ENCODE measurements at regions of chr9 and their contacts with region 1.

Region 1: GRCh38 chr9:1009101-1009707 is 32.7 kb downstream of the DMRT3 start:
- DNase-seq: peak; percentile 93
- H3K4me3 ChIP-seq: no peak overlapping the region
- H3K27ac ChIP-seq: no peak overlapping the region
- H3K4me1 ChIP-seq: peaks cover 0 to 13% (median 3%) of the 10 kb centered on the region in 6 donors
- H3K27me3 ChIP-seq: peaks cover 0 to 54% (median 3%) of the 10 kb centered on the region in 7 donors
- CTCF ChIP-seq: peak; percentile 76 to 97 (median 95)
- POLR2A ChIP-seq: no peak

Region 2: DNA sequence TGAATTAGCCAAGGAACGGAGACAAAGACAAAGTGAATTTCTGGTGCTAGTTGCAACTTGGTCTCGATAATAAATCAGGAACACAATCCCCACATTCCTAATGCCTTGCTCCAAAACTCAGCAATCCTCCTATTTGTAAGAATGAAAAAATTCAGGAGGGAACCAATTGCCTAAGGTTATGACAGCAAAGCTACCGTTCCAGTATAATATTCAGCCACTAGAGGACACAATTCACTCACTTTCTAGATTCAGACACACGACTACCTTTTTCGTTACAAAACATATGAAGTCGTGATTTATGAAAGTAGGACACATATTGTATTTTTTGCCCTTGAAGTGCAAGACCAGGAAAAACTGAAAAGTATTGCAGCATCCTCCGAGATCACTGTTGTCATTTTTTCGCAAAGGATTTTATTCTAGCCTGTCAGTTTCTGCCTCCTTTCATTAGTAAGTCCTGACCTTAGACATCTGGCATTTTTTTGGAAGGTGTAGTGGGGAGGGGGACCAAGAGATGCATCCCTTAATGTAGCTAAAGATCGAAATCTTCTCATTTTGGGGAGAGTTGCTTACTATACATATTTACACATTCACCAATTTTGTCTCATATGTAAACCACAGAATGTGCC is 661.4 kb before region 1 on chr9:
- intact Hi-C with region 1: no loop called
- DNase-seq: no peak
- H3K4me3 ChIP-seq: no peak overlapping the region
- H3K27ac ChIP-seq: no peak overlapping the region
- H3K4me1 ChIP-seq: peaks cover 0 to 41% (median 4%) of the 10 kb centered on the region in 6 donors
- H3K27me3 ChIP-seq: no peaks in the 10 kb centered on the region
- CTCF ChIP-seq: peak in 3 of 11 experiments; percentile 8 to 19 (median 13)
- POLR2A ChIP-seq: no peak

Region 3: GRCh38 chr9:613771-614347 is 395.3 kb before region 1 on chr9:
- intact Hi-C with region 1: loop called (anchors 10 kb)
- DNase-seq: peak; percentile 81
- H3K4me3 ChIP-seq: peak overlapping the region in 1 of 8 donors; percentile 5
- H3K27ac ChIP-seq: peak overlapping the region in 2 of 8 donors; percentile 7 to 49
- H3K4me1 ChIP-seq: peaks cover 0 to 17% (median 12%) of the 10 kb centered on the region in 6 donors
- H3K27me3 ChIP-seq: no peaks in the 10 kb centered on the region
- CTCF ChIP-seq: peak; percentile 53 to 86 (median 73)
- POLR2A ChIP-seq: no peak

Region 4: GRCh38 chr9:899440-900184 is 109.6 kb before region 1 on chr9:
- intact Hi-C with region 1: loop called (anchors 5 kb)
- DNase-seq: no peak
- H3K4me3 ChIP-seq: peak overlapping the region in 1 of 8 donors; percentile 24
- H3K27ac ChIP-seq: peak overlapping the region in 1 of 8 donors; percentile 19
- H3K4me1 ChIP-seq: peaks cover 0 to 16% (median 0%) of the 10 kb centered on the region in 6 donors
- H3K27me3 ChIP-seq: peaks cover 0 to 63% (median 3%) of the 10 kb centered on the region in 7 donors
- CTCF ChIP-seq: no peak
- POLR2A ChIP-seq: no peak

Region 5: GRCh38 chr9:928362-929042 is 80.7 kb before region 1 on chr9:
- intact Hi-C with region 1: no loop called
- DNase-seq: no peak
- H3K4me3 ChIP-seq: no peak overlapping the region
- H3K27ac ChIP-seq: no peak overlapping the region
- H3K4me1 ChIP-seq: no peaks in the 10 kb centered on the region
- H3K27me3 ChIP-seq: peaks cover 0 to 6% (median 0%) of the 10 kb centered on the region in 7 donors
- CTCF ChIP-seq: peak in 4 of 11 experiments; percentile 15 to 35 (median 29)
- POLR2A ChIP-seq: no peak

Region 6: DNA sequence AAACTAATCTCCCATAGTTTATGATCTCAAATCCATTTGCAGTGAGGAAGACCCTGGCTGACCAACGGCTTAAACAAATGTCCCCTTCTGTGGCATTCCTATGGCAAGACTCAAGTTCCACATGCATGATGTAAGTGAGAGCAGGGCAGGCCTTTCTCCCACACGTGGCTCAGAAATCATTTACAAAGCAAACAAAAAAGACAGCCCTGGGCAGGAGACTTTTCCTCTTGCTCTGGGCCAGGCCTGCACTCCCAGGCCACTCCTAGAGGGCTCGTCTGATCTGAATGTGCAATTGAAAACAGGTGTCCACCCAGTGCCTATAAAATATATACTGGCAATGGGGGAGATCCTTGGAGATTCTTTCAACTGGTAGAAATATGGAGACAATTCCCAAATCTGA is 164.0 kb after region 1 on chr9:
- intact Hi-C with region 1: no loop called
- DNase-seq: no peak
- H3K4me3 ChIP-seq: no peak overlapping the region
- H3K27ac ChIP-seq: no peak overlapping the region
- H3K4me1 ChIP-seq: no peaks in the 10 kb centered on the region
- H3K27me3 ChIP-seq: no peaks in the 10 kb centered on the region
- CTCF ChIP-seq: no peak
- POLR2A ChIP-seq: no peak